ENCODE measurements at regions of chr20 and their contacts with region 1.

Region 1: GRCh38 chr20:2093159-2093781 is 8.4 kb upstream of the STK35 start:
- DNase-seq: peak; percentile 9
- H3K4me3 ChIP-seq: no peak overlapping the region
- H3K27ac ChIP-seq: no peak overlapping the region
- H3K4me1 ChIP-seq: no peaks in the 10 kb centered on the region
- H3K27me3 ChIP-seq: no peaks in the 10 kb centered on the region
- CTCF ChIP-seq: peak; percentile 87 to 89

Region 2: GRCh38 chr20:1900321-1900801 is 192.9 kb before region 1 on chr20:
- CTCF ChIA-PET with region 1: no interaction called
- dilution Hi-C with region 1: no loop called
- in situ Hi-C with region 1: no loop called
- intact Hi-C with region 1: loop called (anchors 1 kb)
- DNase-seq: peak; percentile 65
- H3K4me3 ChIP-seq: no peak overlapping the region
- H3K27ac ChIP-seq: no peak overlapping the region
- H3K4me1 ChIP-seq: peaks cover 19% of the 10 kb centered on the region
- H3K27me3 ChIP-seq: no peaks in the 10 kb centered on the region
- CTCF ChIP-seq: peak; percentile 74 to 78

Region 3: GRCh38 chr20:1952737-1953530 is 140.3 kb before region 1 on chr20:
- CTCF ChIA-PET with region 1: no interaction called
- dilution Hi-C with region 1: loop called (anchors 10 kb)
- in situ Hi-C with region 1: no loop called
- intact Hi-C with region 1: no loop called
- DNase-seq: no peak
- H3K4me3 ChIP-seq: no peak overlapping the region
- H3K27ac ChIP-seq: no peak overlapping the region
- H3K4me1 ChIP-seq: no peaks in the 10 kb centered on the region
- H3K27me3 ChIP-seq: no peaks in the 10 kb centered on the region
- CTCF ChIP-seq: no peak

Region 4: DNA sequence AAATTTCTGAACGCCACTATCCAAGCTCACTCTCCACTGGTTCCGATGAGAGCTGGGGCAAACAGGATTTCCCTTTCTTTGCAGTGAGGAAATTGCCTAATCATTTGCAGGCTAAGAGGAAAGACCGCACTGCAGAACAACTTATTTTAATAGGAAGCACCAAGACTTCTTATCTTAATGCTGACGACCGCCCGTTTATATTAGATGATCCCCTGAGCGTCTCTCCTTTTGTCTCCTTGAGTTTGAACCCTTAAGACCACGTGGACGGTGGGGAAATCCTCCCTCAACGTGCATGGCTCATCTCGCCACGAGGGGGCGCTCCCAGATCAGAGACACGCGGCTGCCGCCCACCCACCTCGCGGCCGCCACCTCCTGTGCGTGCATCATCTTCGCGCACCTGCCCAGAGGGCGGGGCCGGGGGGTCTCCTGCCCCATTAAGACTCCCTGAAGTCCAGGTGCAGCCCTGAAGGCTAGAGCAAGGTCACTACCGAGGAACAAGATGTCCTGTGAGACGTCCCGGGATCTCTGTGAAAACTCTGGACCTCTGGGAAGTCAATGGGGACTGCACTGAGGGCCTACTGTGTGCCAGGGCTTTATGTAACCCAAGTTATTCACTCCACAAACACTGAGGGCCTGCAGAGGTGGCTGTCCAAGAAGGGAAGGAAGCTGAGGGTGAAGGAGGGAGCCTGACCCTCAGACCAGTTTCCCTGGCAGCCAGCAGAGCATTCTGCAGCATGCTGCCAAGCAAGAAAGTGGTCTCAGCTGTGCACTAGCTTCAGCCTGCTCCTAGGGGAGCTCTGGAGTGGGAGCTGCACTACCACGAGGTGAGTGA is 127.5 kb before region 1 on chr20:
- CTCF ChIA-PET with region 1: no interaction called
- dilution Hi-C with region 1: no loop called
- in situ Hi-C with region 1: no loop called
- intact Hi-C with region 1: loop called (anchors 1 kb)
- DNase-seq: peak; percentile 37
- H3K4me3 ChIP-seq: no peak overlapping the region
- H3K27ac ChIP-seq: no peak overlapping the region
- H3K4me1 ChIP-seq: peaks cover 3% of the 10 kb centered on the region
- H3K27me3 ChIP-seq: no peaks in the 10 kb centered on the region
- CTCF ChIP-seq: peak; percentile 82 to 94

Region 5: DNA sequence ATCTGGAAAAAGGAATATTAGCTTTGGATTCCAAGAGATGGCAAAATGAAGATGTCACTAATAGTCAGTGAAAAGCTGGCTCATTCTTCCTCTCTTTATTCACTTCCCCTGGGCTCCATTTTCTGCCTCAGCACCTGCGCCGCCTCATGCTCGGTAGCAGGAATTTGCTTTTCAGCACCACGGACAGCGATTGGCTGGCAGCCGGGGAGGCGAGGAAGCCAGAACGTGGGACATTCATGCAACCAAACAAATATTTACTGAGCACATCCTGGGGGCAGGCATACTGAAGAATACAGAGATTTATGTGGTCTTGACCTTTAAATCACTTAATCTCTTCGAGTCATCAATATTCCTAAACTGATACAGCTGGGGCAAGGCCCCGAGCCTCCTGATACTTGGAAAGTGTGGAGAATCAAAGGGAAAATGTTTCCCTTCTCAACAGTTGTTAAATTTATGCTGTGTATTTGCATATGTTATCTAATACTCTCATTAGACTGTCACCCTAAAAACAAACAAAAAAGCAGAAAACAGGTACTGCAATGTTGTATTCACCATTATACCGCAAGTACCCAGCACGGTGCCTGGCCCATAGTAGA is 87.3 kb before region 1 on chr20:
- CTCF ChIA-PET with region 1: no interaction called
- dilution Hi-C with region 1: no loop called
- in situ Hi-C with region 1: no loop called
- intact Hi-C with region 1: loop called (anchors 1 kb)
- DNase-seq: peak; percentile 54
- H3K4me3 ChIP-seq: no peak overlapping the region
- H3K27ac ChIP-seq: no peak overlapping the region
- H3K4me1 ChIP-seq: no peaks in the 10 kb centered on the region
- H3K27me3 ChIP-seq: no peaks in the 10 kb centered on the region
- CTCF ChIP-seq: peak in 1 of 2 donors; percentile 8

Region 6: GRCh38 chr20:2283706-2284423 is 190.6 kb after region 1 on chr20:
- CTCF ChIA-PET with region 1: no interaction called
- dilution Hi-C with region 1: no loop called
- in situ Hi-C with region 1: no loop called
- intact Hi-C with region 1: no loop called
- DNase-seq: peak; percentile 77
- H3K4me3 ChIP-seq: no peak overlapping the region
- H3K27ac ChIP-seq: no peak overlapping the region
- H3K4me1 ChIP-seq: peaks cover 19% of the 10 kb centered on the region
- H3K27me3 ChIP-seq: peaks cover 2% of the 10 kb centered on the region
- CTCF ChIP-seq: no peak